CD4-positive, alpha-beta T cell (primary cell): ENCODE measurements at regions of chr21 and their contacts with region 1.

Region 1: GRCh38 chr21:42666023-42666747 is 12.8 kb downstream of the PDE9A start:
- DNase-seq: peak in 4 of 14 experiments; percentile 22 to 60 (median 42)
- ATAC-seq: peak; percentile 55
- H3K4me3 ChIP-seq: no peak overlapping the region
- H3K4me3 Mint-ChIP-seq: no peak overlapping the region
- H3K27ac ChIP-seq: no peak overlapping the region
- H3K27ac Mint-ChIP-seq: no peak overlapping the region
- H3K4me1 ChIP-seq: peaks cover 5% of the 10 kb centered on the region
- H3K4me1 Mint-ChIP-seq: peaks cover 4% of the 10 kb centered on the region
- H3K27me3 ChIP-seq: no peaks in the 10 kb centered on the region
- H3K27me3 Mint-ChIP-seq: no peaks in the 10 kb centered on the region
- CTCF ChIP-seq: no peak

Region 2: DNA sequence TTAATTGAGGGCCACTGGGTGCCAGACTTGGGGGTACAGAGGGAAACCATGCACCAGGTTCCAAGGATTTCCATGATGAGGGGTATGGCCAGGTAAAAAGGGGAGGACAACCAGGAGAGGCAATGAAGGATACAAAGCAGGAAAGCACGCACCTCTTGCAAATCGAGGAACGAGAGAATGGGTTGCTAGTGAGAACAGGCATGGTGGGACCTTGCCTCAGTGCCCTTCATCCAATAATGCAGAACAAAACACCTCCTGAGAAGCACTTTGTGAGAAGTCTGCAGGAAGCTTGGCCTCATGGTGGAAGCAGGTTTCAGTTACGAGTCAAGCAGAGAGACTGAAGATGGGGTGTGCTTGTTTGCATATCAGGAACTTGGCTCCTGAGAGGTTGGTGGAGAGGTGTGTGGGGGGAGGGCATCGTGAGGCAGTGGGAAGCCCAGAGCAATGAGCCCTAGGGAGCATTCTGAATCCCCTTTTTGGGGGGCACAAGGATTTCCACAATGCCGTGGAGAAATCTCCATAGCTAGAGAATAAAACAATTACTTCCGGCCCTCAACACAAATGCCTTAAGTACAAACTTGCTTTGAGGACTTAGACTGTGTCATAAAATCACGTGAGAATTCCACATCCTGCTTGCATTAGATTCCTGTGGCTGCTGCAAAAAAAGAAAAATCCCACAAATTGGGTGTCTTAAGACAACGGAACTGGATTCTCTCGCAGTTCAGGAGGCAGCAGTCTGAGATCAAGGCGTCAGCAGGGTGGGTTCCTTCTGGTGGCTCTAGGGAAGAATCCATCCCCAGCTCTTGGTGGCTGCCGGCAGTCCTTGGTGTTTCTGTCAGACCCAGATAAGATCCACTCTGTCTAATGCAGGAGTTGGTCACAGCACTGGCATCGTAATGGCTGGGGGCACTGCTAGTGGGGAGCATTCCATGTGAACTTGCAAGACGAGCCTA is 1553.2 kb before region 1 on chr21:
- CTCF ChIA-PET with region 1: no interaction called
- POLR2A ChIA-PET with region 1: no interaction called
- intact Hi-C with region 1: no loop called
- DNase-seq: peak in 3 of 14 experiments; percentile 24 to 30 (median 24)
- ATAC-seq: peak; percentile 60
- H3K4me3 ChIP-seq: peak overlapping the region; percentile 36
- H3K4me3 Mint-ChIP-seq: peak overlapping the region; percentile 86
- H3K27ac ChIP-seq: peak overlapping the region in 1 of 2 donors; percentile 9
- H3K27ac Mint-ChIP-seq: peak overlapping the region; percentile 86
- H3K4me1 ChIP-seq: peaks cover 10% of the 10 kb centered on the region
- H3K4me1 Mint-ChIP-seq: peaks cover 26% of the 10 kb centered on the region
- H3K27me3 ChIP-seq: no peaks in the 10 kb centered on the region
- H3K27me3 Mint-ChIP-seq: no peaks in the 10 kb centered on the region
- CTCF ChIP-seq: no peak

Region 3: GRCh38 chr21:42627527-42628289 is 38.5 kb before region 1 on chr21:
- CTCF ChIA-PET with region 1: no interaction called
- POLR2A ChIA-PET with region 1: no interaction called
- intact Hi-C with region 1: no loop called
- DNase-seq: no peak
- ATAC-seq: no peak
- H3K4me3 ChIP-seq: no peak overlapping the region
- H3K4me3 Mint-ChIP-seq: no peak overlapping the region
- H3K27ac ChIP-seq: no peak overlapping the region
- H3K27ac Mint-ChIP-seq: no peak overlapping the region
- H3K4me1 ChIP-seq: peaks cover 16% of the 10 kb centered on the region
- H3K4me1 Mint-ChIP-seq: no peaks in the 10 kb centered on the region
- H3K27me3 ChIP-seq: no peaks in the 10 kb centered on the region
- H3K27me3 Mint-ChIP-seq: no peaks in the 10 kb centered on the region
- CTCF ChIP-seq: no peak

Region 4: GRCh38 chr21:42799516-42799915 is 133.3 kb after region 1 on chr21:
- CTCF ChIA-PET with region 1: no interaction called
- POLR2A ChIA-PET with region 1: no interaction called
- intact Hi-C with region 1: loop called in 1 of 2 experiments (anchors 5 kb)
- DNase-seq: no peak
- ATAC-seq: no peak
- H3K4me3 ChIP-seq: no peak overlapping the region
- H3K4me3 Mint-ChIP-seq: no peak overlapping the region
- H3K27ac ChIP-seq: no peak overlapping the region
- H3K27ac Mint-ChIP-seq: no peak overlapping the region
- H3K4me1 ChIP-seq: no peaks in the 10 kb centered on the region
- H3K4me1 Mint-ChIP-seq: peaks cover 5% of the 10 kb centered on the region
- H3K27me3 ChIP-seq: no peaks in the 10 kb centered on the region
- H3K27me3 Mint-ChIP-seq: no peaks in the 10 kb centered on the region
- CTCF ChIP-seq: no peak

Region 5: DNA sequence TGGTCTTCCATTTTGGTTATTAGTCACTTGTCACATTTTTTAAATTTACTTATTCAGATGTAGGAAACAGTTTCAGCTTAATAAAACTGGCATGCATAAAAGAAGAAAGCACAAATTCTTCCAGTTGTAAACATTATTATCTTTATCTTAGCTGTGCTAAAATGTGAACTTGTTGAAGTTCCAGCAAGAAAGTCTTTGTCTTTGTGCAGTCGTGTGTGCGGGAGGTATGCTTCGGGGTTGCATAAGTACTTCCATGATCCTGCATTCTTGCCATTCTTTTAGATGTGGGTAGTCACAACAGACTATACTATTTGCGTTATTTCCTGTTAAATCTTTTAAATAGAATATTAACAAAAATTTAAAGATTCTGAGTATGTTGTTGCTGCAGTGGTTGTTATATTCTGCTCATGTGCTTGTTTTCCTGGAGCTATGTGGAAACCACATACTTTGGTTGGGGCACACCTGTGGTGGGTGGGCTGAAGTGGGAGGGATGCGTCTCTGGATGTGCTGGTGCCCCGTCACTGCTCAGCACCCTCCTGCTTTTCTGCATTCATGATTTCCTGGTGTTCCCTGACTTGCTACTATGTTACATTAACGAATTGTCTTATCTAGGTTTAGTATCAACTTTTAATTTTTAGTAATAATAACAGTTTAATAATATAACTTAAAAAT is 359.6 kb after region 1 on chr21:
- CTCF ChIA-PET with region 1: no interaction called
- POLR2A ChIA-PET with region 1: no interaction called
- intact Hi-C with region 1: no loop called
- DNase-seq: no peak
- ATAC-seq: no peak
- H3K4me3 ChIP-seq: no peak overlapping the region
- H3K4me3 Mint-ChIP-seq: no peak overlapping the region
- H3K27ac ChIP-seq: no peak overlapping the region
- H3K27ac Mint-ChIP-seq: no peak overlapping the region
- H3K4me1 ChIP-seq: no peaks in the 10 kb centered on the region
- H3K4me1 Mint-ChIP-seq: no peaks in the 10 kb centered on the region
- H3K27me3 ChIP-seq: no peaks in the 10 kb centered on the region
- H3K27me3 Mint-ChIP-seq: no peaks in the 10 kb centered on the region
- CTCF ChIP-seq: no peak

Region 6: DNA sequence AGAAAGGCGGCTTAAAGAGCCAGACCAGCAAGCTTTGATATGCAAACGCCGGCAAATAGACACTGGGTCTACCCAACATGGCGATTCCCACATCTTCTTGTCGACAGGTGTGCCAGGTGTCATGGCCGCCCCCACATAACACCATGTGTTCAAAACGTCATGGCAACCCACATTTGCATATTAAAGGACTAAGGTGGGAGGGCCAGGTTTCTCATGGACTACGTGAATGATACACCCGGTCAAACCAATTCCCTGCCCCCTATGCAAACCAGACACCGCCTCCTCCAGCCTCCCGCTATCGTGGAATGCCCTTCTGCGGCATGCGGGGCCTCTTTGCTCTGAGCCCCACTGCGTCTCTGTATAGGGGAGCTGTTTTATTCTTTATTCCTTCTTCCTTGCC is 1533.3 kb after region 1 on chr21:
- CTCF ChIA-PET with region 1: no interaction called
- POLR2A ChIA-PET with region 1: no interaction called
- intact Hi-C with region 1: no loop called
- DNase-seq: no peak
- ATAC-seq: no peak
- H3K4me3 ChIP-seq: no peak overlapping the region
- H3K4me3 Mint-ChIP-seq: no peak overlapping the region
- H3K27ac ChIP-seq: no peak overlapping the region
- H3K27ac Mint-ChIP-seq: no peak overlapping the region
- H3K4me1 ChIP-seq: peaks cover 10% of the 10 kb centered on the region
- H3K4me1 Mint-ChIP-seq: no peaks in the 10 kb centered on the region
- H3K27me3 ChIP-seq: no peaks in the 10 kb centered on the region
- H3K27me3 Mint-ChIP-seq: no peaks in the 10 kb centered on the region
- CTCF ChIP-seq: no peak